Activated B cell treated with CpG ODN at 0.5 μM for 24 hours (primary cell): ENCODE measurements at regions of chr19 and their contacts with region 1.

Region 1: GRCh38 chr19:54339646-54340358 is 840 bp upstream of the LILRA4 start:
- DNase-seq: peak; percentile 56
- ATAC-seq: peak; percentile 86
- H3K4me3 Mint-ChIP-seq: peak overlapping the region; percentile 66
- H3K27ac Mint-ChIP-seq: peak overlapping the region; percentile 89
- H3K4me1 Mint-ChIP-seq: peaks cover 84% of the 10 kb centered on the region
- H3K27me3 Mint-ChIP-seq: no peaks in the 10 kb centered on the region
- CTCF ChIP-seq: no peak

Region 2: DNA sequence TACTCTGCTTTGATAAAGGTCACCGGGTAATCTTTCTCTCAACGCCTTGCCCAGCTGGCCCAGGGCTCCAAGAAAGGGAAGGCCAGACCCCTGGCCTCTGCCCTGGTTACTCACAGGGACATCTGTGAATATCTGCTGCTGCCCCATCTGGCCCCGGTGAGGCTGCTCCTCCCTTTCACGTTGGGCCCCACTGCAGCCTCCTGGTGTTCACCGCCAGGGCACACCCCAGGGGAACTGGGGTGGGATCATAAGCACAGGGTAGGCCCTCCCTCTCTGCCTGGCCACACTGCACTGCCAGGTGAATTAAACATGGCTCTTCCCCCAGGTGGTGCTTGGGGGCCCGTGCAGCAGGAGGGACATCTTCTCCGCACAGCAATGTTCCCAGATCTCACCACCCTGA is 12.2 kb after region 1 on chr19:
- CTCF ChIA-PET with region 1: interaction called, 3 read pairs
- POLR2A ChIA-PET with region 1: interaction called, 21 read pairs
- intact Hi-C with region 1: loop called (anchors 1 kb)
- DNase-seq: no peak
- ATAC-seq: peak; percentile 78
- H3K4me3 Mint-ChIP-seq: peak overlapping the region; percentile 36
- H3K27ac Mint-ChIP-seq: peak overlapping the region; percentile 83
- H3K4me1 Mint-ChIP-seq: peaks cover 62% of the 10 kb centered on the region
- H3K27me3 Mint-ChIP-seq: peaks cover 4% of the 10 kb centered on the region
- CTCF ChIP-seq: no peak